ENCODE measurements at regions of chr18 and their contacts with region 1.

Region 1: GRCh38 chr18:623761-624620 is 27.2 kb downstream of the CLUL1 start:
- DNase-seq: peak in 4 of 5 donors; percentile 67 to 83 (median 70)
- H3K4me3 ChIP-seq: no peak overlapping the region
- H3K27ac ChIP-seq: no peak overlapping the region
- H3K4me1 ChIP-seq: peaks cover 0 to 2% (median 0%) of the 10 kb centered on the region in 3 donors
- H3K27me3 ChIP-seq: no peaks in the 10 kb centered on the region
- CTCF ChIP-seq: peak; percentile 61

Region 2: GRCh38 chr18:839224-840022 is 215.4 kb after region 1 on chr18:
- intact Hi-C with region 1: loop called (anchors 10 kb)
- DNase-seq: peak; percentile 88 to 91 (median 90)
- H3K4me3 ChIP-seq: no peak overlapping the region
- H3K27ac ChIP-seq: no peak overlapping the region
- H3K4me1 ChIP-seq: peaks cover 0 to 4% (median 3%) of the 10 kb centered on the region in 3 donors
- H3K27me3 ChIP-seq: no peaks in the 10 kb centered on the region
- CTCF ChIP-seq: peak; percentile 97